Pancreas (tissue), 10 donors: ENCODE measurements at regions of chr15 and their contacts with region 1.

Region 1: DNA sequence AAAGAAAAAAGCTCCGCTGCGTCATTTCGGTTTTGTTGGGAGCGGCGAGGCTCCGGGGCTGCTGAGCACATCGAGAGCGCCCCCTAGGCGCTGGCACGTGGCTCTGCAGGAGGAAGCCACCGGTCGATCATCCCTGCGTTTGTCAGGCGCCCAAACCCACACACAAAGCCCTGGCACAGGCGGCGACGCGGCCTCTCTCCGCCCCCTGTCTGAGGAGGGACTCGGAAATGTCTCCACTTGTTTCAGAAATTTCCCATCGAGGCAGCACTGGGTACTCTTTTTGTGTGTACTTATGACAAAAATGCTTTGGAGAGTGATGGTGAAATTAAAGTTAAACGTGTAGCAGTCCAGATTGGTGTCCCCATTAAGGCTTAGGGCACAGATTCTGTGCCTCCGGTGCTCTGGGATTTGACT is 407.3 kb upstream of the ONECUT1 start:
- DNase-seq: peak; percentile 64 to 89 (median 80)
- ATAC-seq: peak; percentile 98 to 100 (median 99)
- H3K4me3 ChIP-seq: peak overlapping the region in 2 of 4 donors; percentile 3 to 28
- H3K27ac ChIP-seq: no peak overlapping the region
- H3K4me1 ChIP-seq: no peaks in the 10 kb centered on the region
- H3K27me3 ChIP-seq: no peaks in the 10 kb centered on the region
- CTCF ChIP-seq: peak; percentile 84 to 96 (median 92)

Region 2: GRCh38 chr15:52780172-52780980 is 417.1 kb before region 1 on chr15:
- intact Hi-C with region 1: loop called in 1 of 3 experiments (anchors 5 kb)
- DNase-seq: peak in 5 of 6 donors; percentile 57 to 86 (median 71)
- ATAC-seq: peak; percentile 8 to 28 (median 12)
- H3K4me3 ChIP-seq: peak overlapping the region in 1 of 4 donors; percentile 6
- H3K27ac ChIP-seq: peak overlapping the region in 2 of 4 donors; percentile 32 to 40
- H3K4me1 ChIP-seq: peaks cover 8 to 39% (median 34%) of the 10 kb centered on the region in 3 donors
- H3K27me3 ChIP-seq: no peaks in the 10 kb centered on the region
- CTCF ChIP-seq: peak; percentile 62 to 86 (median 70)

Region 3: DNA sequence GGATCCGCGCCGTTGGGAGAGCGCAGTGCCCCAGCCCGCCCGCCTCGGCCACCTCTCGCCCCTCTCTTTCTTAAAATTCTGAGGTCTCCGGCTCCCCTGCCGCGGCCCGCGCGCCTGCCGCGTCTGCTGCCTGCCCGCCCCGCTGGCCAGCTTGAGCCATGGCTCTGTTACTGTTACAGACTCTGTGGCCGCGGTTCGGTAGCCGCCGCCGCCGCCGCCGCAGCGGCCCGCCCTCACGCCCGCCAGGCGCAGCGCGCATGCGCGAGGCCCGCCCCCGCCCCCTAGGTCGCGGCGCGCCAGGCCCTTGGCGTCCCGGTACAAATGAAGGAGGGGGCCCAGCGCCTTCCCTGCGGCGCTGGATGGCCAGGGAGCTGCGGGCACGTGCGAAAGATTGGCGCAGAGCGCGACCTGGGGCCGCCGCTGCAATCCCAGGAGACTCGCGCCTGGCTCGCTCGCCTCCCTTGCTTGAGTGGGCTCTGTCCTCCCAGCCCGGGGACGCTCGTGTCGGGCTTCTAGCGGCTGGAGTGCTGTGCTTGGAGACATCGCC is 407.2 kb before region 1 on chr15 and contains the start of gene ONECUT1:
- intact Hi-C with region 1: loop called in 1 of 3 experiments (anchors 5 kb)
- DNase-seq: peak; percentile 74 to 95 (median 90)
- ATAC-seq: peak; percentile 46 to 72 (median 63)
- H3K4me3 ChIP-seq: peak within 1 kb of the TSS; percentile 61 to 83 (median 66)
- H3K27ac ChIP-seq: peak within 1 kb of the TSS; percentile 62 to 92 (median 79)
- H3K4me1 ChIP-seq: no peaks in the 10 kb centered on the region
- H3K27me3 ChIP-seq: no peaks in the 10 kb centered on the region
- CTCF ChIP-seq: no peak
- total RNA-seq, gene ONECUT1: 30.4 to 56.2 (median 37.7) TPM